GM13976 (cell line): ENCODE measurements at regions of chr5 and their contacts with region 1.

Region 1: DNA sequence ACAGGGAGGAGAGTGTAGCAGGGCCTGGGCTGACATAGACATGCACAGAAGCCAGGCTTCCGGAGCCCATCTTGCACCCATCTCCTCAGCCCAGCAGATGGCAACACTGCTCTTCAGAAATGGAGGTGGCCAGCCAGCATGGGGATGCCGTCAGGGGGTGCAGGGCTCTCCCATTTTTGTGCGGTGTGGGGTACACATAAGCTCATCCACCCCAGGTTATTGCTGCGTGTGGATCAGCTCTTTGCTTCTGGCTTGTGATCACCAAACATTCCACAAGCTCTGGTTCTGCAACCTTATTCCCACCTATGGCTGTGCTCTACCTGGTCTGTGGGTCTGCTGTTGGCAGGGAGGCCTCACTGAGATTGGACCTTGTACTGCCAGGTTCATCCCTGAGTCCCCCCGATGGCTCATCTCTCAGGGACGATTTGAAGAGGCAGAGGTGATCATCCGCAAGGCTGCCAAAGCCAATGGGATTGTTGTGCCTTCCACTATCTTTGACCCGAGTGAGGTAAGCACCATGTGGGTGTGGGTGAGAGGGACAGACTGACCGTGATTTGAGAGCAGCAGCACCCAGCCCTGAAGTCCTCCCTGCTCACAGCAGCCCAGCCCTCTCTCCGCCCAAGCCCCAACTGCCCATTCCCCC is 17.3 kb downstream of the SLC22A5 start:
- DNase-seq: peak; percentile 88
- CTCF ChIP-seq: peak; percentile 96

Region 2: GRCh38 chr5:132495667-132496190 is 109.0 kb after region 1 on chr5:
- in situ Hi-C with region 1: loop called (anchors 5 kb)
- DNase-seq: peak; percentile 88
- CTCF ChIP-seq: no peak

Region 3: GRCh38 chr5:132820162-132820754 is 433.5 kb after region 1 on chr5:
- in situ Hi-C with region 1: loop called (anchors 10 kb)
- DNase-seq: peak; percentile 90
- CTCF ChIP-seq: peak; percentile 89